A673 (cell line): ENCODE measurements at regions of chr20 and their contacts with region 1.

Region 1: GRCh38 chr20:52033301-52033700 is 158.3 kb downstream of the ZFP64 start:
- DNase-seq: peak; percentile 60
- H3K4me3 ChIP-seq: no peak overlapping the region
- H3K27ac ChIP-seq: no peak overlapping the region
- H3K4me1 ChIP-seq: peaks cover 28% of the 10 kb centered on the region
- H3K27me3 ChIP-seq: no peaks in the 10 kb centered on the region
- CTCF ChIP-seq: no peak

Region 2: GRCh38 chr20:51650685-51651134 is 382.6 kb before region 1 on chr20:
- CTCF ChIA-PET with region 1: no interaction called
- POLR2A ChIA-PET with region 1: interaction called, 14 read pairs
- intact Hi-C with region 1: no loop called
- DNase-seq: peak; percentile 86
- H3K4me3 ChIP-seq: no peak overlapping the region
- H3K27ac ChIP-seq: peak overlapping the region; percentile 75
- H3K4me1 ChIP-seq: peaks cover 52% of the 10 kb centered on the region
- H3K27me3 ChIP-seq: no peaks in the 10 kb centered on the region
- CTCF ChIP-seq: no peak

Region 3: GRCh38 chr20:51712501-51713197 is 320.7 kb before region 1 on chr20:
- CTCF ChIA-PET with region 1: no interaction called
- POLR2A ChIA-PET with region 1: no interaction called
- intact Hi-C with region 1: no loop called
- DNase-seq: peak; percentile 66
- H3K4me3 ChIP-seq: no peak overlapping the region
- H3K27ac ChIP-seq: no peak overlapping the region
- H3K4me1 ChIP-seq: peaks cover 25% of the 10 kb centered on the region
- H3K27me3 ChIP-seq: no peaks in the 10 kb centered on the region
- CTCF ChIP-seq: peak; percentile 75

Region 4: GRCh38 chr20:51833374-51834017 is 199.8 kb before region 1 on chr20:
- CTCF ChIA-PET with region 1: no interaction called
- POLR2A ChIA-PET with region 1: no interaction called
- intact Hi-C with region 1: no loop called
- DNase-seq: no peak
- H3K4me3 ChIP-seq: no peak overlapping the region
- H3K27ac ChIP-seq: no peak overlapping the region
- H3K4me1 ChIP-seq: no peaks in the 10 kb centered on the region
- H3K27me3 ChIP-seq: no peaks in the 10 kb centered on the region
- CTCF ChIP-seq: no peak

Region 5: GRCh38 chr20:51889466-51889865 is 143.8 kb before region 1 on chr20:
- CTCF ChIA-PET with region 1: no interaction called
- POLR2A ChIA-PET with region 1: interaction called, 13 read pairs
- intact Hi-C with region 1: no loop called
- DNase-seq: no peak
- H3K4me3 ChIP-seq: no peak overlapping the region
- H3K27ac ChIP-seq: no peak overlapping the region
- H3K4me1 ChIP-seq: peaks cover 6% of the 10 kb centered on the region
- H3K27me3 ChIP-seq: no peaks in the 10 kb centered on the region
- CTCF ChIP-seq: no peak